Activated CD8-positive, alpha-beta memory T cell treated with anti-CD3 and anti-CD28 coated beads, Interleukin-2, amount 10 ng/mL, durations not matched to agents 7 days and 5 days (primary cell): ENCODE measurements at regions of chrX and their contacts with region 1.

Region 1: GRCh38 chrX:24498975-24499374 is 33.9 kb downstream of the PDK3 start:
- DNase-seq: no peak
- ATAC-seq: peak; percentile 86
- H3K4me3 Mint-ChIP-seq: no peak overlapping the region
- H3K27ac Mint-ChIP-seq: peak overlapping the region; percentile 62
- H3K4me1 Mint-ChIP-seq: peaks cover 14% of the 10 kb centered on the region
- H3K27me3 Mint-ChIP-seq: no peaks in the 10 kb centered on the region

Region 2: DNA sequence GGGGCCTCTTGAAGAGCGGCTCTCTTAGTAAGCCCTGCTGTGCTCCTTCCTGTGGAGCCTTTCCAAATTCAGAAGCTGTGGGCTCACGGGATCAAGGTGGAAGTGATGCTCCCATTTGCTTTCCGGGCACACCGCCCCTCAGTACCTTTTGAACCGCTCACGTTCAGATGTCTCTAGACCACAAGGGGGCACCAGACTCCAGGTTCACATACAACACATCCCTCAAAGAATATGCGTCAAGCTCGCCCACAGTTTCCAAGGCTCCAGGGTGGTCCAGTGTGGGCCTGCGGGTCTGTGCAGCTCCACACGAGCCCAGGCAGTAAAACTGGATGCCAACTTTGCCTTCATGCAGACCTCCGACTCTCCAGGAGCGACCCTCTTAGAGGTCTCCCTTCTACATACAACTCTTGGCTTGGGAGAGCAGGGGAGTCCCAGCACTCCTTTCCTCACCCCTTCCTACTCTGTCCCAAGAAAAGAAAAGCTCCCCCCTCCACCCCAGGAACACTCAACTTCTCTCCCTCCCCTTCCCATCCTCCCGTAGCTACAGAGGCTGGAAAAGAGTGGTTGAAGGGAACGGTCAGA is 127.5 kb before region 1 on chrX:
- CTCF ChIA-PET with region 1: interaction called, 27 read pairs
- DNase-seq: peak; percentile 70
- ATAC-seq: peak; percentile 82
- H3K4me3 Mint-ChIP-seq: peak overlapping the region; percentile 65
- H3K27ac Mint-ChIP-seq: peak overlapping the region; percentile 32
- H3K4me1 Mint-ChIP-seq: peaks cover 26% of the 10 kb centered on the region
- H3K27me3 Mint-ChIP-seq: no peaks in the 10 kb centered on the region

Region 3: DNA sequence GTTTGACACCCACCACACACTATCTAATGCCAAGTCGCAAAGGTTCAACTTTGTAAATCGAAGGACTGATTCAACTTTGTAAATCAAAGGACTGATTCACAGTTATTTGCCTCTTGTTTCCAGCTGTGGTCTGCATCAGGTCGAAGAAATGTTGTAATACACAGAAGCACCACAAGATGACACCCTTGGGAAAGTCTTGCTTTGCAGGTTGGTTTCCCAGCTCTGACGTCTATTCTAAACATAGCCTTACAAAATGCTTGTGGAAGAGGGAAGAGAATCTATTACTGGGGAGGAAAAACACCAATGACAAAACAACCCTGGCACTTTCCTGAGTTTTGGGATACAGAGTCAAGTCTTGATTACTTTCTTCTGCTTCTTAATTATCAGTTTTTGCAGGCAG is 103.2 kb before region 1 on chrX:
- CTCF ChIA-PET with region 1: interaction called, 63 read pairs
- DNase-seq: peak; percentile 48
- ATAC-seq: peak; percentile 51
- H3K4me3 Mint-ChIP-seq: no peak overlapping the region
- H3K27ac Mint-ChIP-seq: no peak overlapping the region
- H3K4me1 Mint-ChIP-seq: peaks cover 1% of the 10 kb centered on the region
- H3K27me3 Mint-ChIP-seq: peaks cover 5% of the 10 kb centered on the region

Region 4: GRCh38 chrX:24741330-24741729 is 242.4 kb after region 1 on chrX:
- CTCF ChIA-PET with region 1: no interaction called
- DNase-seq: no peak
- ATAC-seq: no peak
- H3K4me3 Mint-ChIP-seq: no peak overlapping the region
- H3K27ac Mint-ChIP-seq: no peak overlapping the region
- H3K4me1 Mint-ChIP-seq: no peaks in the 10 kb centered on the region
- H3K27me3 Mint-ChIP-seq: no peaks in the 10 kb centered on the region